ENCODE measurements at regions of chr22 and their contacts with region 1.

Region 1: DNA sequence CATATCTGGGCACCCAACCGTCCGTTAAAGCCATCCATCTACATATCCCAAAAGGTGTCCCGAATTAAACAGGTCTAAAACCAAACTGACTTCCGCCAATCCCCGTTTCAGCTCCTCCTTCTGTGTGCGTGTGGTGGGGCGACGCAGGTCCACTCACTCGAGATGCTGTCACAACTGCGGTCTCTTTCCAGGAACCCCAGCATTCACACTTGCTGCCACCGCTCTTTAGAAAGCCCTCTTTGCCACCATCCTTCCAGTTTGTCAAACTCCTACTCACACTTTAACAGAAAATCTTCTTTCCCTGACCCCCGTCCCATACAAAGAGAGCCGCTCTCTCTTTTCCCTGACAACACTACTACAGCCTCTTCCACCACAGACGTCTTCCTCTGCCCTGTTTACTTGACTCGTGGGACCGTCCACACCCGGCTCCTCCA is 467 bp downstream of the ESS2 start:
- DNase-seq: peak in 4 of 10 donors; percentile 26 to 49 (median 36)
- ATAC-seq: peak; percentile 15 to 27
- H3K4me3 Mint-ChIP-seq: peak overlapping the region; percentile 96 to 100 (median 99)
- H3K27ac Mint-ChIP-seq: peak overlapping the region; percentile 92 to 99 (median 98)
- H3K4me1 Mint-ChIP-seq: peaks cover 14 to 36% (median 23%) of the 10 kb centered on the region in 4 donors
- H3K27me3 Mint-ChIP-seq: peaks cover 0 to 15% (median 0%) of the 10 kb centered on the region in 5 donors

Region 2: GRCh38 chr22:19097518-19097917 is 46.5 kb before region 1 on chr22:
- POLR2A ChIA-PET with region 1: no interaction called
- DNase-seq: no peak
- ATAC-seq: no peak
- H3K4me3 Mint-ChIP-seq: no peak overlapping the region
- H3K27ac Mint-ChIP-seq: peak overlapping the region in 6 of 10 donors; percentile 11 to 80 (median 40)
- H3K4me1 Mint-ChIP-seq: peaks cover 20 to 53% (median 46%) of the 10 kb centered on the region in 4 donors
- H3K27me3 Mint-ChIP-seq: no peaks in the 10 kb centered on the region

Region 3: DNA sequence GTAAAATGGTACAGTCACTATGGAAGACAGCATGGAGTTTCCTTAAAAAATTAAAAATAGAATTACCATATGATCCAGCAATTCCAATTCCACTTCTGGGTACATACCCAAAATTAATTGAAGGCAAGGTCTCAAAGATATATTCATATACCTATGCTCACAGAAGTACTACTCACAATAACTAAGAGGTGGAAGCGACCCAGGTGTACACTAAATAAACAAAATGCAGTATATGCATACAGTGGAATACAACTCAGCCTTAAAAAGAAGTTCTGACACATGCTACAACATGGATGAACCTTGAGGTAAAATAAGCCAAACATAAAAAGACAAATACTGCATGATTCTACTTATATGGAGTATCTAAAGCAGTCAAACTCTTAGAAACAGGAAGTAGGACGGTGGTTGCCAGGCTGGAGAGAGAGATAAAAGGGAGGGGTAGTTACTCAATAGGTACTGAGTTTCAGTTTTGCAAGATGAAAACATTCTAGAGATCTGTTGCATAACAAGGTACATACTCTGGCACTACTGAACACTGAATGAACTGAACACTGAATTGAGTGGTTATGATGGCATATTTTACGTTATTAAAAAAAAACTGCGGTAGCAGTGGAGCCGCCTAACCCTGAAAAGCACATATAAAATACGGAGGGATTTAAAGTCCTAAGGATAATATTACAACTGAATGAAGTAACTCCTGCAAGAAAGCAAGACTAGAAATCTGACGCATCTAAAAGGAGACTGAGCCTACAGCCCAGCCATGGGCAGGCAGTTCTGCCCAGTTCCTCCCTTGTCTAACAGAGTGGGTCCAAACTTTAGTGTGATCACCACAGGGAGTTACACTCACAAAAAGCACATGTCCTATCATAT is 34.6 kb before region 1 on chr22:
- POLR2A ChIA-PET with region 1: interaction called, 11 read pairs
- DNase-seq: peak; percentile 24 to 86 (median 64)
- ATAC-seq: peak; percentile 87 to 89
- H3K4me3 Mint-ChIP-seq: peak overlapping the region; percentile 63 to 88 (median 84)
- H3K27ac Mint-ChIP-seq: peak overlapping the region; percentile 93 to 99 (median 97)
- H3K4me1 Mint-ChIP-seq: peaks cover 47 to 81% (median 73%) of the 10 kb centered on the region in 4 donors
- H3K27me3 Mint-ChIP-seq: no peaks in the 10 kb centered on the region

Region 4: GRCh38 chr22:19122143-19122751 is 21.7 kb before region 1 on chr22 and contains the start of gene DGCR2:
- POLR2A ChIA-PET with region 1: interaction called, 18 read pairs
- DNase-seq: peak; percentile 88 to 98 (median 96)
- ATAC-seq: peak; percentile 93 to 96
- H3K4me3 Mint-ChIP-seq: peak within 1 kb of the TSS; percentile 86 to 94 (median 90)
- H3K27ac Mint-ChIP-seq: peak within 1 kb of the TSS; percentile 83 to 94 (median 91)
- H3K4me1 Mint-ChIP-seq: peaks cover 25 to 54% (median 51%) of the 10 kb centered on the region in 4 donors
- H3K27me3 Mint-ChIP-seq: no peaks in the 10 kb centered on the region
- polyA plus RNA-seq, gene DGCR2: 29.5 to 61.8 (median 37.8) TPM

Region 5: GRCh38 chr22:19178656-19179496 is 34.9 kb after region 1 on chr22 and contains the start of gene SLC25A1:
- POLR2A ChIA-PET with region 1: interaction called, 10 read pairs
- DNase-seq: peak in 9 of 10 donors; percentile 42 to 82 (median 62)
- ATAC-seq: peak; percentile 64 to 77
- H3K4me3 Mint-ChIP-seq: peak within 1 kb of the TSS; percentile 73 to 92 (median 86)
- H3K27ac Mint-ChIP-seq: peak within 1 kb of the TSS in 9 of 10 donors; percentile 44 to 88 (median 83)
- H3K4me1 Mint-ChIP-seq: peaks cover 6 to 32% (median 28%) of the 10 kb centered on the region in 4 donors
- H3K27me3 Mint-ChIP-seq: no peaks in the 10 kb centered on the region
- polyA plus RNA-seq, gene SLC25A1: 34.7 to 57.5 (median 41.7) TPM

Region 6: DNA sequence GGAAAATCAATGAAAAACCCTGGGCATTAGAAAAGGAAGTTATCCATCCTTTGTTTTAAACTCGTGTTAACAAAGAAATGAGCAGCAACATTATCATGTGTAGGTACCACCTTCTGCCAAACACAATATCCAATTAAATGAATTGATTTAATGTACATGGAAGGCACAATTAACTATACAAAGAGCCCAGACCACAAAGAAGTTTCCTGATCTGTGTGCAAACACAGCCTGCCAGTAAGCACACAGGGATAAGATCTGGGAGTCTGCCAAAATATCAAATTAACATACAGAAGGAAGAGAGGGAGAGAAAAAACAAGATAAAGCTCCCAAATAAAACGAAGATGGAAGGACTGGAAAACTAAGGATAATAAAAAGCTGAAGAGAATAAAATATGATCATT is 88.6 kb after region 1 on chr22:
- POLR2A ChIA-PET with region 1: no interaction called
- DNase-seq: no peak
- ATAC-seq: no peak
- H3K4me3 Mint-ChIP-seq: no peak overlapping the region
- H3K27ac Mint-ChIP-seq: no peak overlapping the region
- H3K4me1 Mint-ChIP-seq: no peaks in the 10 kb centered on the region
- H3K27me3 Mint-ChIP-seq: peaks cover 4 to 20% (median 8%) of the 10 kb centered on the region in 5 donors